ENCODE measurements at regions of chrX and their contacts with region 1.

Region 1: GRCh38 chrX:19990556-19991349 is at the start of gene BCLAF3:
- DNase-seq: peak; percentile 90
- ATAC-seq: peak; percentile 89
- H3K4me3 ChIP-seq: peak within 1 kb of the TSS; percentile 57 to 68 (median 62)
- H3K4me3 Mint-ChIP-seq: peak within 1 kb of the TSS; percentile 93
- H3K27ac ChIP-seq: peak within 1 kb of the TSS; percentile 71 to 73
- H3K27ac Mint-ChIP-seq: peak within 1 kb of the TSS; percentile 91
- H3K4me1 ChIP-seq: peaks cover 6 to 11% of the 10 kb centered on the region in 2 donors
- H3K4me1 Mint-ChIP-seq: peaks cover 20% of the 10 kb centered on the region
- H3K27me3 ChIP-seq: no peaks in the 10 kb centered on the region
- H3K27me3 Mint-ChIP-seq: no peaks in the 10 kb centered on the region
- CTCF ChIP-seq: peak; percentile 65
- total RNA-seq, gene BCLAF3: 21.1 and 21.5 TPM in 2 replicates

Region 2: DNA sequence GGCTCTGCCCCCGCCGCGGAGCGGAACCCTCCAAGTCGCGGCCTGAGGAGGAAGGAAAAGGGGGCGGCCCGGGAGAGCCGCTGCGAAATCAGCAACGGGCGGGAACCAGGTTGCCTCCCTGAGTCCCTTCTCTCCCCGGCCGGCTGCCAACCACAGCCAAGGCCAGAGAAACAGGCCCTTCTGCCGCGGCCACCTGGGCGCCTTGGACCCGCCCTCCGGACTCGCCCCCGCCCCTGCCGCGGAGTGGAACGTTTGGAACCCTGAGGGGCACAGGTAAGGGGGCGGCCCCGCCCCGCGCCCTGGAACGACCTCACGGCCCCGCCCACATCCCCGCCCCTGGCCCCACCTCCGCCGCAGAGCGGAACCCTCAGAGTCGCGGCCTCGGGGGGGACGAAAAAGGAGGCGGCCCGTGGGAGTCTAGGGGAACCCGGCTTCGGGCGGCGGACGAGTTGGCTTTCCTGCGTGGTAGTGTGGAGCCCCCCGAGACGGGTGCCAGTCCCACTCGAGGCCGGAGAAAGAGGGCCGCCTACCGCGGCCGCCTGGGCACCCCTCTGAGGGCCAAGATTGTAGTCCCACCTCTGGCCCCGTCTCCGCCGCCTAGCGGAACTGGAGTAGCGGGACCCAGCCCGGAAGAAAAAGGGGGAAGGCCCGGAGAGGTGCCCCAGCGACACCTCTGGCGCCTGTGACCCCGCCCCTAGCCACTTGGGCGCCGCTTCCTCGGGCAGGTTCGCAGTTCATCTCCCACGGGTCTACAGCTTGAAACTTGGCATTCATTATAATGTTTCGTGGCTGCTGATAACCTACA is 1006.2 kb before region 1 on chrX:
- CTCF ChIA-PET with region 1: no interaction called
- POLR2A ChIA-PET with region 1: no interaction called
- intact Hi-C with region 1: loop called (anchors 2 kb)
- DNase-seq: peak; percentile 90
- ATAC-seq: peak; percentile 86
- H3K4me3 ChIP-seq: peak overlapping the region; percentile 56 to 77 (median 70)
- H3K4me3 Mint-ChIP-seq: peak overlapping the region; percentile 89
- H3K27ac ChIP-seq: peak overlapping the region; percentile 88 to 91
- H3K27ac Mint-ChIP-seq: peak overlapping the region; percentile 94
- H3K4me1 ChIP-seq: peaks cover 11 to 14% of the 10 kb centered on the region in 2 donors
- H3K4me1 Mint-ChIP-seq: peaks cover 18% of the 10 kb centered on the region
- H3K27me3 ChIP-seq: no peaks in the 10 kb centered on the region
- H3K27me3 Mint-ChIP-seq: no peaks in the 10 kb centered on the region
- CTCF ChIP-seq: peak; percentile 50

Region 3: GRCh38 chrX:19593690-19594089 is 397.1 kb before region 1 on chrX:
- CTCF ChIA-PET with region 1: interaction called, 3 read pairs
- POLR2A ChIA-PET with region 1: no interaction called
- intact Hi-C with region 1: loop called (anchors 1 kb)
- DNase-seq: peak; percentile 59
- ATAC-seq: no peak
- H3K4me3 ChIP-seq: no peak overlapping the region
- H3K4me3 Mint-ChIP-seq: no peak overlapping the region
- H3K27ac ChIP-seq: no peak overlapping the region
- H3K27ac Mint-ChIP-seq: no peak overlapping the region
- H3K4me1 ChIP-seq: no peaks in the 10 kb centered on the region
- H3K4me1 Mint-ChIP-seq: no peaks in the 10 kb centered on the region
- H3K27me3 ChIP-seq: no peaks in the 10 kb centered on the region
- H3K27me3 Mint-ChIP-seq: no peaks in the 10 kb centered on the region
- CTCF ChIP-seq: peak; percentile 63

Region 4: GRCh38 chrX:19811807-19812604 is 178.7 kb before region 1 on chrX:
- CTCF ChIA-PET with region 1: no interaction called
- POLR2A ChIA-PET with region 1: no interaction called
- intact Hi-C with region 1: no loop called
- DNase-seq: no peak
- ATAC-seq: no peak
- H3K4me3 ChIP-seq: no peak overlapping the region
- H3K4me3 Mint-ChIP-seq: no peak overlapping the region
- H3K27ac ChIP-seq: peak overlapping the region in 1 of 2 donors; percentile 57
- H3K27ac Mint-ChIP-seq: peak overlapping the region; percentile 16
- H3K4me1 ChIP-seq: peaks cover 9 to 15% of the 10 kb centered on the region in 2 donors
- H3K4me1 Mint-ChIP-seq: peaks cover 63% of the 10 kb centered on the region
- H3K27me3 ChIP-seq: no peaks in the 10 kb centered on the region
- H3K27me3 Mint-ChIP-seq: no peaks in the 10 kb centered on the region
- CTCF ChIP-seq: no peak

Region 5: DNA sequence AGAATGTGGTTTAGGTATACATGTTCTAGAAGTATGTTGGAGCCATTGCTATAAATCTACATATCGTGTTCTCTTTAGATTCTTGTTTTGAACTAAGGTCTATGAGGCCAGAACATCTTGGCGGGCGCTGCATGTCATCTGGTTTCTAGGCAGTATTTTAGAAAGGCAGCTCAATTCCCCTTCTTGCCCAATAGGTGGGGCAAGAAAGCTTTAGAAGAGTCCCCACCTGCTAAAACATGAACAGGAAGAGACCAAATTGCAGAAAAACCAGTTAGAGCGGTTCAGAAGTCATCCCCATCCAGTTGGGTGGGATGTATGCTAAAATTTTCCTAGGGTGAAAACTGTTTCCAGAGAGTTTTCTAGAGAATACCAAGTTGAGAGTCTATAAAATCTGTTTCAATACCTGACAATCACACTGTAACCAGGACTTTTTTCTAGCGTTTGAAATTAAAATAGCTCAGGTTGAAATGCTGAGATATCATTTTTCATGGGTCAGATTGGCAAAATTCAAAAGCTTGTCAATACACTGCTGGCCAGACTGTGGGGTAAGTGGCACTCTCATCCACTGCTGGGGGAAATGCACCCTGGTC is 85.9 kb before region 1 on chrX:
- CTCF ChIA-PET with region 1: interaction called, 8 read pairs
- POLR2A ChIA-PET with region 1: no interaction called
- intact Hi-C with region 1: loop called (anchors 1 kb)
- DNase-seq: peak; percentile 62
- ATAC-seq: peak; percentile 57
- H3K4me3 ChIP-seq: no peak overlapping the region
- H3K4me3 Mint-ChIP-seq: no peak overlapping the region
- H3K27ac ChIP-seq: no peak overlapping the region
- H3K27ac Mint-ChIP-seq: no peak overlapping the region
- H3K4me1 ChIP-seq: peaks cover 0 to 5% of the 10 kb centered on the region in 2 donors
- H3K4me1 Mint-ChIP-seq: peaks cover 11% of the 10 kb centered on the region
- H3K27me3 ChIP-seq: no peaks in the 10 kb centered on the region
- H3K27me3 Mint-ChIP-seq: no peaks in the 10 kb centered on the region
- CTCF ChIP-seq: peak; percentile 76

Region 6: DNA sequence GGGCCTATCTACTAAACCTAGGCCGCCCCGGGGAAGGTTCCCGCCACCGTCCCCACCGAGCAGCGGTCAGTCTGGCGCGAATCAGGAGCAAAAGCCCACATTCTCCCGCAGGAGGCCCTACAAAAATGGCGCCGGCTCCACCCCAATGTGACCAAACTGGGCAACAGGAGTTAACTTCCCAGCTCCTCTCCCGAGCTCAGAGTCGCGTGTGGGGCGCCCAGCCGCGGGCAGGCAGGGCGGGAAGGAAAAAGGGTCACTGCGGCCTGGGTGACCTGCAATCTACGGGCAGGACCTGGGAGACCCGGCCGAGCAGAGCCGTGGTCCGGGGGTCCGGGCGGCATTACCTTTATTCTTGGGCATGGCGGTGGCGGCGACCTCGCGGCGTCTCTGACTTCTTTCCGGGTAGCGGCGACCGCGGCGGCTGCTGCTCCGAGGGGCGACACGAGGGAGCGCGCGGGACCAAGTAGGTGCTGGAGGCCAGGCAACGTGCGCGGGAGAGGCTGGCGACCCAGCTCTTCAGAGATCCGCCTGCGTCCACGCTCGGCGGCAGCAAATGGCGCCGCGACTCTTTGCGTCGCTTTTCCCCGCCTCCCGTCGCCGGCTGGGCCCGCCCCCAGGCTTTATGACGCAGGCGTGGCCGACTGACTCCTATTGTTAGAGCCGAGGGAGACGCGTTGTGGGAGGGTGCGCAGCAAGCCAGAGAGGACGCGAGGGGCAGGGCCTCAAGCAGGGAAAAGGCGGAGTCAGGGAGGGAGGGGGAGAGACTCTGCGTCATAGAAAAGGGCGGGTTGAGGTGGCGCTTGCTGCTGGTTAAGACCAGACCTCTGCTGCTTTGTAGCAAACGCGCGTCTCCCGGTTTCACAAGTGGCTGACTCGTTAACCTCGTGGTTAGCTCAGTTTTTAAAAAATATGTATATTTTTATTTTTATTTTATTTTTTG is 150.8 kb after region 1 on chrX and contains the start of gene EIF1AX:
- CTCF ChIA-PET with region 1: no interaction called
- POLR2A ChIA-PET with region 1: no interaction called
- intact Hi-C with region 1: loop called (anchors 2 kb)
- DNase-seq: peak; percentile 96
- ATAC-seq: peak; percentile 99
- H3K4me3 ChIP-seq: peak within 1 kb of the TSS; percentile 77 to 98 (median 86)
- H3K4me3 Mint-ChIP-seq: peak within 1 kb of the TSS; percentile 87
- H3K27ac ChIP-seq: peak within 1 kb of the TSS; percentile 74 to 92
- H3K27ac Mint-ChIP-seq: peak within 1 kb of the TSS; percentile 88
- H3K4me1 ChIP-seq: peaks cover 15 to 16% of the 10 kb centered on the region in 2 donors
- H3K4me1 Mint-ChIP-seq: peaks cover 21% of the 10 kb centered on the region
- H3K27me3 ChIP-seq: no peaks in the 10 kb centered on the region
- H3K27me3 Mint-ChIP-seq: no peaks in the 10 kb centered on the region
- CTCF ChIP-seq: no peak
- total RNA-seq, gene EIF1AX: 39.3 and 42.7 TPM in 2 replicates